Mammary epithelial cell (primary cell): ENCODE measurements at regions of chr5 and their contacts with region 1.

Region 1: GRCh38 chr5:657570-657969 is 35.6 kb downstream of the TPPP start:
- DNase-seq: no peak
- H3K4me3 ChIP-seq: no peak overlapping the region
- H3K27ac ChIP-seq: no peak overlapping the region
- H3K4me1 ChIP-seq: no peaks in the 10 kb centered on the region
- H3K27me3 ChIP-seq: no peaks in the 10 kb centered on the region
- CTCF ChIP-seq: no peak

Region 2: GRCh38 chr5:513216-514100 is 144.1 kb before region 1 on chr5:
- CTCF ChIA-PET with region 1: no interaction called
- dilution Hi-C with region 1: loop called (anchors 10 kb)
- in situ Hi-C with region 1: no loop called
- intact Hi-C with region 1: no loop called
- DNase-seq: no peak
- H3K4me3 ChIP-seq: no peak overlapping the region
- H3K27ac ChIP-seq: no peak overlapping the region
- H3K4me1 ChIP-seq: peaks cover 7% of the 10 kb centered on the region
- H3K27me3 ChIP-seq: peaks cover 4% of the 10 kb centered on the region
- CTCF ChIP-seq: no peak

Region 3: GRCh38 chr5:611721-612486 is 45.7 kb before region 1 on chr5 and contains the start of gene CEP72:
- CTCF ChIA-PET with region 1: no interaction called
- dilution Hi-C with region 1: no loop called
- in situ Hi-C with region 1: no loop called
- intact Hi-C with region 1: no loop called
- DNase-seq: peak; percentile 81
- H3K4me3 ChIP-seq: peak within 1 kb of the TSS; percentile 74 to 94 (median 78)
- H3K27ac ChIP-seq: peak within 1 kb of the TSS; percentile 75
- H3K4me1 ChIP-seq: peaks cover 14% of the 10 kb centered on the region
- H3K27me3 ChIP-seq: no peaks in the 10 kb centered on the region
- CTCF ChIP-seq: no peak
- total RNA-seq, gene CEP72: 3.5 to 13.4 TPM

Region 4: DNA sequence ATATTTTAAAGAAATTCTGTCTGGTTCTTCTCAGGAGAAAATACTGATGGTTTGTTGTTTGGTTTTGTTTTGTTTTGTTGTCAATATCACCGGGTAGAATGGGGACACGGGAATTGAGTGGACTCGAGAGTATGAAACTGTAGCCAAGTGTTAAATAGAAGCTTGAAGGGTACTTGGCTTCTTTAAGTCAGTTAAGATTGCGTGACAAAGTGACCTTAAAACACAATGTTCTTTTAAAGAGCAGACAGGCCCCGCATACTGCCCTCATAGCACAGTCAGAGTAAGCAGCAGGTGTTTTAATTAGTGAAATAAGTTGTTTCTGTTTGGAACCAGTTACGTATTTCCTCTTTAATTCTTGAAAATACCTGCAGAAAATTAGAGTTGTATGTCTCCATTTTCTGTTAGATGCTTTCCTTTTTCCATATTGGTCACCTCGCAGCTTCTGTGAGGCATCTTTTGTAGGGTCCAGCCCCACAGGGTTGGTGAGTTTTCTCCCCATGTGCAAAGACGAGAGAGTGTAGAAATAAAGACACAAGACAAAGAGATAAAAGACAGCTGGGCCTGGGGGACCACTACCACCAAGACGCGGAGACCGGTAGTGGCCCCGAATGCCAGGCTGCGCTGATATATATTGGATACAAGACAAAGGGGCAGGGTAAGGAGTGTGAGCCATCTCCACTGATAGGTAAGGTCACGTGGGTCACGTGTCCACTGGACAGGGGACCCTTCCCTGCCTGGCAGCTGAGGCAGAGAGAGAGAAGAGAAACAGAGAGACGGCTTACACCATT is 244.8 kb after region 1 on chr5:
- CTCF ChIA-PET with region 1: no interaction called
- dilution Hi-C with region 1: loop called (anchors 10 kb)
- in situ Hi-C with region 1: loop called in 1 of 2 experiments (anchors 25 kb)
- intact Hi-C with region 1: no loop called
- DNase-seq: no peak
- H3K4me3 ChIP-seq: no peak overlapping the region
- H3K27ac ChIP-seq: no peak overlapping the region
- H3K4me1 ChIP-seq: no peaks in the 10 kb centered on the region
- H3K27me3 ChIP-seq: no peaks in the 10 kb centered on the region
- CTCF ChIP-seq: no peak

Region 5: GRCh38 chr5:1052641-1053390 is 395.2 kb after region 1 on chr5:
- CTCF ChIA-PET with region 1: no interaction called
- dilution Hi-C with region 1: loop called (anchors 10 kb)
- in situ Hi-C with region 1: no loop called
- intact Hi-C with region 1: no loop called
- DNase-seq: no peak
- H3K4me3 ChIP-seq: no peak overlapping the region
- H3K27ac ChIP-seq: no peak overlapping the region
- H3K4me1 ChIP-seq: no peaks in the 10 kb centered on the region
- H3K27me3 ChIP-seq: no peaks in the 10 kb centered on the region
- CTCF ChIP-seq: peak; percentile 17 to 44